Activated T-helper 2 cell treated with anti-CD3 and anti-CD28 coated beads, Interferon-gamma antibody, Interleukin-2, Interleukin-4, amounts not matched to agents 10 μg/mL and 5 μg/mL and 100 μg/mL, durations not matched to agents 14 hours and 24 hours and 36 hours (primary cell): ENCODE measurements at regions of chr6 and their contacts with region 1.

Region 1: GRCh38 chr6:42453031-42453653 is 1.4 kb upstream of the TRERF1 start:
- DNase-seq: peak; percentile 80
- H3K4me3 Mint-ChIP-seq: peak overlapping the region; percentile 98
- H3K27ac Mint-ChIP-seq: no peak overlapping the region
- H3K4me1 Mint-ChIP-seq: peaks cover 34% of the 10 kb centered on the region
- H3K27me3 Mint-ChIP-seq: peaks cover 5% of the 10 kb centered on the region

Region 2: GRCh38 chr6:42428326-42429041 is 24.7 kb before region 1 on chr6:
- intact Hi-C with region 1: loop called (anchors 1 kb)
- DNase-seq: peak; percentile 42
- H3K4me3 Mint-ChIP-seq: no peak overlapping the region
- H3K27ac Mint-ChIP-seq: peak overlapping the region; percentile 47
- H3K4me1 Mint-ChIP-seq: peaks cover 46% of the 10 kb centered on the region
- H3K27me3 Mint-ChIP-seq: no peaks in the 10 kb centered on the region

Region 3: GRCh38 chr6:42890311-42891198 is 437.4 kb after region 1 on chr6:
- intact Hi-C with region 1: loop called (anchors 5 kb)
- DNase-seq: peak; percentile 88
- H3K4me3 Mint-ChIP-seq: peak overlapping the region; percentile 86
- H3K27ac Mint-ChIP-seq: peak overlapping the region; percentile 96
- H3K4me1 Mint-ChIP-seq: peaks cover 16% of the 10 kb centered on the region
- H3K27me3 Mint-ChIP-seq: no peaks in the 10 kb centered on the region